ENCODE measurements at regions of chr6 and their contacts with region 1.

Region 1: GRCh38 chr6:42224222-42224989 is 6.7 kb upstream of the MRPS10 start:
- DNase-seq: peak; percentile 20 to 97
- H3K4me3 ChIP-seq: peak overlapping the region; percentile 61
- H3K27ac ChIP-seq: peak overlapping the region; percentile 99
- H3K4me1 ChIP-seq: peaks cover 97% of the 10 kb centered on the region
- H3K27me3 ChIP-seq: no peaks in the 10 kb centered on the region
- CTCF ChIP-seq: no peak

Region 2: DNA sequence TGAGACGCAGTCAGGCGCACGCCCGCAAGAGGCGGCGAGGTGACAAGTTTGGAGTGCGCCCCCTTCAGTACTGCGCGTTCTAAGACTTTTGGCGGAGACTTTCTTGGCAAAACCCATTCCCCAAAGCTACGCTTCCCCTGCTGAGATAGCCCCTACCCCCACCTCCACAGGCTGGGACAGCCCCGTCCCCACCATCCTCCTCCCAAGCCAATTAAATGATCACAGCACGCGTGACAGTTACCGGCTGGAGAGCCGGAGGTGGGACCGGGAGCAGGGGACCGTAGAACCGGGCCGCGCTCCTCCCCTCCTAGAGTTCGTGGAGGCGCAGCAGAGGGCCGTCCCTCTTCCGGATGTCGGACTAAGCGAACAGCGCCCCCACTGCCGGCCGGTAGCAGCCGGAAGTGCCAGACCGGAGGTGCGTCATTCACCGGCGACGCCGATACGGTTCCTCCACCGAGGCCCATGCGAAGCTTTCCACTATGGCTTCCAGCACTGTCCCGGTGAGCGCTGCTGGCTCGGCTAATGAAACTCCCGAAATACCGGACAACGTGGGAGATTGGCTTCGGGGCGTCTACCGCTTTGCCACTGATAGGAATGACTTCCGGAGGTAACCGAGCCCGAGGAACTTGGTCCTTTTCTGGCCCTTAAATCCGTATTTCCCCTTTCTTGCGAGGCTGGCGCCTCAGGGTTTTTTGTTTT is 437.0 kb before region 1 on chr6 and contains the start of gene TOMM6:
- CTCF ChIA-PET with region 1: no interaction called
- POLR2A ChIA-PET with region 1: interaction called, 15 read pairs
- intact Hi-C with region 1: no loop called
- DNase-seq: peak; percentile 83 to 92
- H3K4me3 ChIP-seq: peak within 1 kb of the TSS; percentile 100
- H3K27ac ChIP-seq: peak within 1 kb of the TSS; percentile 91
- H3K4me1 ChIP-seq: peaks cover 42% of the 10 kb centered on the region
- H3K27me3 ChIP-seq: no peaks in the 10 kb centered on the region
- CTCF ChIP-seq: peak; percentile 88
- total RNA-seq, gene TOMM6: 143 and 170 TPM in 2 replicates

Region 3: DNA sequence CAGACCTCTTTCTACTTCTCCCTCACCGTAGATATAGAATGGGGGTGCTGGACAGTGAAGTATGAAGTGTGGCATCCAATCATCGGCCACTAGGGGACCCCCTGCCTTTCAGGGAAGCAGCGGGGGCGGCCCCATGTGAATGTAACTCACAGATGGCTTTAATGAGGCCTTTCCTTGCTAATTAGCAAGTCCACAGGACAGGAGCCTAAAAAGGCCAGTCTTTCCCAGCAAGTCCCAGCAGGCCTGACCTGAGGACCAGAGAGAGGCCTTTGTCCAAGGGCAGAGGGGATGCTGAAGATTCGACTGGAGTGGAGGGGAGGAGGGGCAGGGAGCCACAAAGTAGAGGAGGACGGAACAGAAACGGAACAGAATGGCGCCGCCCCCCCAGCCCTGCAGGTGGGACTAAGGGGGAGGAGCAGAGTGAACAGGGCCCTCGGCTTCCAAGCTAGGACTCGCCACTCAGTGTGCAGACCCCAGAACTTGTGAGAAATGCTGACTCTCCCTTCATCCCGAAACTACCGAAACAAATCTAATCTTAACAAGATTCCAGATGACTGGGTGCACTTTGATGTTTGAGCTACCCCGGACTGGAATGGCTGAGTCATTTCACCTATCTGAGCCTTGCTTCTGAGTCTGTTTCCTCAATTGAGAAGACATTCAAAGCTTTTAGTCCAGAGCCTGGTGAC is 87.8 kb before region 1 on chr6:
- CTCF ChIA-PET with region 1: interaction called, 3 read pairs
- POLR2A ChIA-PET with region 1: interaction called, 10 read pairs
- intact Hi-C with region 1: no loop called
- DNase-seq: peak in 1 of 2 experiments; percentile 94
- H3K4me3 ChIP-seq: peak overlapping the region; percentile 43; the same call in 1 of the 2 replicates
- H3K27ac ChIP-seq: peak overlapping the region; percentile 98
- H3K4me1 ChIP-seq: peaks cover 77% of the 10 kb centered on the region
- H3K27me3 ChIP-seq: no peaks in the 10 kb centered on the region
- CTCF ChIP-seq: no peak

Region 4: GRCh38 chr6:42294759-42295158 is 70.4 kb after region 1 on chr6:
- CTCF ChIA-PET with region 1: no interaction called
- POLR2A ChIA-PET with region 1: interaction called, 13 read pairs
- intact Hi-C with region 1: loop called (anchors 10 kb)
- DNase-seq: peak; percentile 67 to 97
- H3K4me3 ChIP-seq: no peak overlapping the region
- H3K27ac ChIP-seq: peak overlapping the region; percentile 91
- H3K4me1 ChIP-seq: peaks cover 69% of the 10 kb centered on the region
- H3K27me3 ChIP-seq: no peaks in the 10 kb centered on the region
- CTCF ChIP-seq: no peak

Region 5: DNA sequence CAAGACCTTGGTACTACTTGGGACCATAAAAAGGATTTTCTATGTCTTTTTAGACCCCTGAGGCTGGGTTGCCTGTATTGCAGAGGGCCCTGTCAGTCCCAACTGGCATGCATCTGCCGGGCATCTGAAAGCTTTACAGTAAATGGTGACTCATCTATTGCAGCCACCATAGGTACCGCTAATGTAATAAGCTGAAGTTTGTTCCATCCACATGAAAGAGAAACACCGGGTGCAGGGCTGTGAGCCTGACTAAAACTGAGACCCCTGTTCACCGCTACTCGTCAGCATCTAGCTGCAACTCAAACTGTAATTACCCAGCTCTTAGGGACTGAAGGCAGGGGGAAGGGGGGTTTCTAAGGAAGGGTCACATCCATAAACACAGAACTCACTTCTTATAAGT is 177.8 kb after region 1 on chr6:
- CTCF ChIA-PET with region 1: no interaction called
- POLR2A ChIA-PET with region 1: no interaction called
- intact Hi-C with region 1: loop called (anchors 2 kb)
- DNase-seq: peak; percentile 6 to 45
- H3K4me3 ChIP-seq: no peak overlapping the region
- H3K27ac ChIP-seq: no peak overlapping the region
- H3K4me1 ChIP-seq: peaks cover 52% of the 10 kb centered on the region
- H3K27me3 ChIP-seq: no peaks in the 10 kb centered on the region
- CTCF ChIP-seq: no peak

Region 6: DNA sequence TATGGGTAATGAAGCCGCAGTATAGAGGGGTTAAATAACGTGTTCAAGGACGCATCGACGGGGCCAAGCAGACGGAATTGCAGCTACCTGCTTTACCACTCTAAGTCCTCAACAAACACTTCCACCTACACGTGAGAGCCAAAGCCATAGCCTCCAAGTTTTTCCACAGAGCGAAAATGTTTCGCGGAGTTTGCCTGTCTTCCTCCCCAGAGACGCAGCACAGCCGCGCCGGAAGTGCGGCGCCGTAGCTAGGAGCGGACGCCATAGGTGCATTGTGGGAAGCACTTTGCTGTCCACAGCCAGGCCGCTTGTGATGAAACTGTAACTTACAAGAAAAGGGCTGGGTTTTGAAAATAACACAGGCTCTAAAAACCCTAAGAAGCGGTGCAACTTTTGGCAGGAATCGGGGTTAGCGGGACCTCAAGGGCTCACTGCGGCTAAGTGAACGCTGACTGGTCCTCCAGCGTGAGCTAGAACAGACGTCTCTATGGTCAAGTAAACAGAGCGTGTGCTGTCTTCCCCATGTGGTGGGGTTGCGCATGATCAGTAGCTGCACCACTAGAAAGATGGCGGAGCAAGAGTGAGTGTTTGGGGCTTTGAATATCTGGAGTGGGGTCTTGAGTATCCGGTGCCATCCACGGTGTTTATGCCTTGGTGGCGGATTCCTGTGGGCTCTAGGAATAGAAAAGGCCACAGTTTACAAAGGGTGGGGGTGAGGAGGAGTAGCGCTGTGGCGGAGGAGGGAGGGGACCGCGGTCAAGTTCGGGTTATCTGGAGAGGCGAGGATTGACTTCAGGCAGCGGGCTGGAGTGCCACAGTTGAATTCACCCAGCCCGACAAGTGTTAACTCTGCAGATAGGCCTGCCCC is 655.2 kb after region 1 on chr6 and contains the start of gene RPL7L1:
- CTCF ChIA-PET with region 1: no interaction called
- POLR2A ChIA-PET with region 1: interaction called, 5 read pairs
- intact Hi-C with region 1: loop called (anchors 10 kb)
- DNase-seq: peak; percentile 74 to 84
- H3K4me3 ChIP-seq: peak within 1 kb of the TSS; percentile 96
- H3K27ac ChIP-seq: peak within 1 kb of the TSS; percentile 91
- H3K4me1 ChIP-seq: peaks cover 10% of the 10 kb centered on the region
- H3K27me3 ChIP-seq: no peaks in the 10 kb centered on the region
- CTCF ChIP-seq: 0 out of 2 replicates have a peak, but pooled peaks have one; percentile 14
- total RNA-seq, gene RPL7L1: 84.1 and 87.1 TPM in 2 replicates

Measured in PC-9 (cell line).